Dendritic cell treated with granulocyte-macrophage colony-stimulating factor and Interleukin-4, amounts not matched to agents 40 ng/mL and 50 ng/mL, for 4 days (primary cell): ENCODE measurements at regions of chr6 and their contacts with region 1.

Region 1: DNA sequence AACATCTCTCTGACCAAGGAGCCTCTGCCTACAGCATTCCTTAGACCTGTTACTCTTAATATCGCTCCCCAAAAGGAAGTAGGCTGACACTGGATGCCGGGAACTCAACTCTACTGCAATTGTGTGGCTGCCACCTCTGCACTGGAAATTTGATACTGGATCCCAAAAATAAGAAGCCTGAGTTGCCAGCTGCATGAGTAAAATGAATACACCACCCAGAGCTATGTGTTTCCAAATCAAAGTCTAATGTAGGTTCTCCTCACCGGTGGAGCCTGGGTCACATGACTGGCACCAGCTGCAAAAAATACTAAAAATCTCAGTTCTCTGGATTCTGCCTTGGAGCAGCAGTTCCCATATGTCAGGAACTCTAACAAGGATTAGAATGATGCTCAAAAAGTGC is 36.8 kb downstream of the UNC5CL start:
- H3K4me3 Mint-ChIP-seq: no peak overlapping the region
- H3K27ac Mint-ChIP-seq: no peak overlapping the region
- H3K4me1 Mint-ChIP-seq: peaks cover 12% of the 10 kb centered on the region
- H3K27me3 Mint-ChIP-seq: peaks cover 52% of the 10 kb centered on the region

Region 2: GRCh38 chr6:40978687-40979289 is 23.4 kb before region 1 on chr6:
- intact Hi-C with region 1: no loop called
- H3K4me3 Mint-ChIP-seq: no peak overlapping the region
- H3K27ac Mint-ChIP-seq: no peak overlapping the region
- H3K4me1 Mint-ChIP-seq: no peaks in the 10 kb centered on the region
- H3K27me3 Mint-ChIP-seq: peaks cover 61% of the 10 kb centered on the region

Region 3: DNA sequence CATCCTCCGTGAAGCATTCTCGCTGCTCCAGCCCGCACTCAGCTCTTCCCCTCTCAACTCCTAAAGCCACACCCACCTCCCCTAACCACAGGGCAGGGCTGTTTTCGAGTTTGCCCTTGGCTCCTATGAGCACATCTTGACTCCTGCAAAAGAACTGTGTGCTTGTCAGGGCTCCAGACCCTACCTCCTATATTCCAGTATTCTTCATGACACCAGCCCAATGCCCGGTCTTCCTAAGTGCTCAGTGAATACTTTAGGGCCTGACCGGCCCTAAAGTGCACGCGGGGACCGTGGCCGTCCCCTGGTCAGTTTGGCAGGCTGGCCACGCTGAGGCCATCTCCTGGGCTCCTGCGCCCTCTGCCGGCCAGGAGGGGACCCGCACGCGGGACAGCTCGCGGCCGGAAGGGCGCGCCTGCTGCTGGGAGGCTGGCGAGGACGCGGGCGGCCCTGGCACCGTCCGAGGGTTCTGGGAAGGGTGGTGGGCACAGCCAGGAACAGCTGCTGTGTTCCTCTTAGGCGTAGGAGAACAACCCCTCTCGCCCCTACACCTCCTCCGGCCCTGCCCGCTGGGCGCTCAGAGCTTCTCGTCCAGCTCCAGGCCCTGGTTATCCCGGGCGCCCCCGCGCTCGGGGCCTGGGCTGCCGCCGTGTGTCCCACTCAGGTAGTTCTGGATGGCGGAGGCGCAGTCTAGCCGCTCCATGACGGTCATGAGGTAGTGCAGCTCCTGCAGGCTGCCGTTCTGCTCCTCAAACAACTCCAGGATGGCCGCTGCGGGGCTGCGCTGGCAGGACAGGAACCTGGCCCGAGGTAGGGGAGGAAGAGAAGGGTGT is 25.8 kb after region 1 on chr6:
- intact Hi-C with region 1: loop called (anchors 2 kb)
- H3K4me3 Mint-ChIP-seq: peak overlapping the region; percentile 71
- H3K27ac Mint-ChIP-seq: peak overlapping the region; percentile 62
- H3K4me1 Mint-ChIP-seq: peaks cover 42% of the 10 kb centered on the region
- H3K27me3 Mint-ChIP-seq: peaks cover 5% of the 10 kb centered on the region

Region 4: GRCh38 chr6:41066867-41067304 is 64.7 kb after region 1 on chr6:
- intact Hi-C with region 1: loop called (anchors 1 kb)
- H3K4me3 Mint-ChIP-seq: no peak overlapping the region
- H3K27ac Mint-ChIP-seq: no peak overlapping the region
- H3K4me1 Mint-ChIP-seq: peaks cover 15% of the 10 kb centered on the region
- H3K27me3 Mint-ChIP-seq: no peaks in the 10 kb centered on the region

Region 5: DNA sequence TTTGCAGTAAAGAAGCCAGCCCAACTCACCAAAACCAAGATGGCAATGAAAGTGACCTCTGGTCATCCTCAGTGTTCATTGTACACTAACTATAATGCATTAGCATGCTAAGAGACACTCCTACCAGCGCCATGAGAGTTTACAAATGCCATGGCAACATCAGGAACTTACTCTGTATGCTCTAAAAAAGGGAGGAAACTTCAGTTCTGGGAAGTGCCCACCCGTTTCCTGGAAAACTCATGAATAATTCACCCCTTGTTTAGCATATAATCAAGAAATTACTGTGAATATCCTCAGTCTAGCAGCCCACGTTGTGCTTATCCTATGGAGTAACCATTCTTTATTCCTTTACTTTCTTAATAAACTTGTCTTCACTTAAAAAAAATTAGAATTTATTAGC is 1468.9 kb after region 1 on chr6:
- intact Hi-C with region 1: no loop called
- H3K4me3 Mint-ChIP-seq: no peak overlapping the region
- H3K27ac Mint-ChIP-seq: no peak overlapping the region
- H3K4me1 Mint-ChIP-seq: no peaks in the 10 kb centered on the region
- H3K27me3 Mint-ChIP-seq: peaks cover 7% of the 10 kb centered on the region